ENCODE measurements at regions of chr20 and their contacts with region 1.

Region 1: DNA sequence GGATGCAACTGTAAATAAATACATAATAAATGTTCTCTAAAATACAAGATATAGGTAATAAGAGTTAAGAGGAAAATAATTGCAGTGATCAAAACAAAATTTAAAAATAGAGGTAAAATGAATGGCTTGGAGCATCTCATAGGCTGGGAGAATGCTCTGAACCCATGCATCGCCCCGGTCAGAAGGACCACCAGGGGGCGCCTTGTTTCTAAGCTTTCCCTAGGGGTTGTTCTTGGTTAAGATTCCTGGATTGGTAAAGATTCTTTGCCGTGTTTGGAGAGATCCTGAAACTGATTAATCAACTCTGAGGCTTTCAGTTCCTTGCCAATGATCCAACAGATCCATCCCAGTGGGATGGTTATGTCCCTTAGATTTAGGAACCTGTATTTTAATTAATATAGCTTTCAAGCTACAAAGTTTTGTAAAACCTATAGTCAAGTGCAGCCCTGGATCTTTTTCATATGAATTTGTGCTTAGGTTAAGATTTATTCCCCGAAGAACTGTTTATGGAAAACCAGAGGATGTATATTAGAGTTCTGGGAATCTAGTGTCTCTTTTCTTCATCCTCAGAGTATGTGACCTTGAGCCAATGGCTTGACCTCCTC is 45.3 kb upstream of the PRELID3B start:
- DNase-seq: peak; percentile 90

Region 2: DNA sequence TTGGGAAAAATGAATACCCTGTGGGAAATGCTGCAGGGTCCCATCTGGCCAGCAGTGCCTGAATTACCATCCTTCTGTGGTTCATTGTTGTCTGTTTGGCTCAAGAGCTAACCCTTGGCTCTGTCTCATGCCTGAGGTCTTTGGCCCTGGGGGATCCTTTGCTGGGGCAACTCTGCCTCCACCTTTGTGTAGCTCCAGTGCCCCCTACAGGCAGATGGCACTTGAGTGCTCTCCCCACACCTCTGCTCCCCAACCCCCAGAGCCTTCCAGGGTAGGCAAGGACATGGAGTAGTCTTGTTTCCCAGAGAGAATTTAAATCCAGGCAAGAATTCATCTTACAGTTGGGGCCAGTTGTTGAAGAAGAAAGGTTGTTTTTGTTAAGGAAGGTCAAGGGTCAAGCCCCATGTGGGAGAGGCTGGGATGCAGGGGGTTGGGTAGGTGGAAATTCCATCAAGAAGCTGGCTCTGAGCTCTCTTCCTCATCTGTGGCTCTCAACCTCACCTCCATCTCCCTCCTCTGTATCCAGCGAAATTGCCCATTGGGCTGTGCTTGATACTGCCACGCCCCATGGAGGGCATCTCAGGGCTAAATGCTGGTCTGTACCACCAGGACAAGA is 119.9 kb after region 1 on chr20:
- intact Hi-C with region 1: loop called (anchors 1 kb)
- DNase-seq: no peak

Region 3: DNA sequence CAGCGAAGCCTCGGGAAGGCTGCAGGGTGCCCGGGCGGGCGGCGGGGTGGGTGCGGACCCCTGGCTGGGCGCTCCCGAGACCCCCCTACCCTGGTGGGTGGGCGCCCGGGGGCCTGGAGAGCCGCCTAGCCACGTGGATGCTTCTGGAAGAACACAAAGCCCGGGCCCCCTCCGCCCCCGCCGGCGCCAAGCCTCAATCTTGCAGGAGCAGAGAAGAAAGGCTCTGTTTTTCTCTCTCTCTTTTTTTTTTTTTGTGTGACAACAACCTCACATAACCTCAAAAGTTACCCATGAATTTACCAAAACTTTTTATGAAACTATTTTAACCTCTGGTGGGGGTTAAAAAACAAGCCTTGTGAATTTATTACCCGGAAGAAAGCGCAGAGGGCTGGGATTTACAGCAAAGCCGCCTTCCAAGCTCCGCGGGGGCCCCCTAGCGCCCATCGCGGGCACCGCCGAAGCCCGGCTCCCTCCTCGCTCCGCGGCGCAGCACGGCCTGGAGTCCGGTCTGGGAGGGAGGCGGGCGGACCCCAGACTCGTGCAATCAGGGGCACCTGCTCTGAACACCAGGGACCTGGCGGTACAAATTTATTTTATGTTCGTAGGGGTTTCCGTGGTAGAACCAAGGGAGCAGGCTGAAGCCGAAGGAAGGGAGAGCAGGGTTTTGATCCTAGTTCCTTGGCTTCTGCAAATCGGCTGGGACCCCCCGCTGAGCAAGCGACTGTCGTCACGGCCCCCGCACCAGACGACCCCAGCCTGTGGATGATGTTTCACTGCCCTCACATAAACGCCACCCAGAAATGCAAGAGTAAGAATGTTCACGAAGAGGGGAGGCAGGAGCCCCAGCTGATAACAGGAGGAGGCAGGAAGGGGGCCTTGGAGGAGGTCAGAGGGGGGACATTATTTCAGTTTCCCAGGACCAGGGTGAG is 134.6 kb after region 1 on chr20:
- intact Hi-C with region 1: loop called (anchors 1 kb)
- DNase-seq: peak; percentile 91

Region 4: GRCh38 chr20:59322899-59323454 is 235.0 kb after region 1 on chr20:
- intact Hi-C with region 1: no loop called
- DNase-seq: no peak

Region 5: DNA sequence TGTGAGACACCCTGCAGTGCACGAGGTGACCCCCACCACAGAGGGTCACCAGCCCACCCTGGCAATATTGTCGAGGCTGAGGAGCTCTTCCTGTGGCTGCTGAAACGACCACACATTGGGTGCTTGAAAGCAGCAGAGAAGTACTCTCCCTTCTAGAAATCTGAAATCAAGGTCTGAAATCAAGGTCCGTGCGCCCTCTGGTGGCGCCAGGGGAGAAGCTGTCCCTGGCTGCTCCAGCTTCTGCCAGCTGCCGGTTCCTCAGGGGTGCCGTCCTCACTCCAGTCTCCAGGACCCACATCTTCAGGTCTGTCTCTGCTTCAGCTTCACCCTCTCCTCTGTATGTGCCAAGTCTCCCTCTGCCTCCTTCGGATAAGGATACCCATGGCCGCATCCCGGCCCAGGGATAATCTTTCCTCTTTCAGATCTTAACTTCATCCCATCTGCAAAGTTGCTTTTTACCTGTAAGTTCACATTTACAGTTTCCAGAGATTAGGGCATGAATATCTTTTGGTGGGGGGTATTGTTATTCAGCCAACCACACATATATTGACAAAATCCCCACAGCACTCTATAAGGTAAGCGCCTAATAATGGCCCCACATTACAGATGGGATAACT is 408.1 kb after region 1 on chr20:
- intact Hi-C with region 1: no loop called
- DNase-seq: peak; percentile 81

Measured in cardiac septum (tissue), 1 donor.